ENCODE measurements at regions of chr6 and their contacts with region 1.

Region 1: GRCh38 chr6:37741757-37742400 is 44.2 kb upstream of the MDGA1 start:
- DNase-seq: no peak
- ATAC-seq: no peak; the same call in 1 of the 2 replicates
- H3K4me3 ChIP-seq: no peak overlapping the region
- H3K27ac ChIP-seq: no peak overlapping the region
- H3K4me1 ChIP-seq: no peaks in the 10 kb centered on the region
- H3K27me3 ChIP-seq: peaks cover 20% of the 10 kb centered on the region
- CTCF ChIP-seq: peak; percentile 49

Region 2: DNA sequence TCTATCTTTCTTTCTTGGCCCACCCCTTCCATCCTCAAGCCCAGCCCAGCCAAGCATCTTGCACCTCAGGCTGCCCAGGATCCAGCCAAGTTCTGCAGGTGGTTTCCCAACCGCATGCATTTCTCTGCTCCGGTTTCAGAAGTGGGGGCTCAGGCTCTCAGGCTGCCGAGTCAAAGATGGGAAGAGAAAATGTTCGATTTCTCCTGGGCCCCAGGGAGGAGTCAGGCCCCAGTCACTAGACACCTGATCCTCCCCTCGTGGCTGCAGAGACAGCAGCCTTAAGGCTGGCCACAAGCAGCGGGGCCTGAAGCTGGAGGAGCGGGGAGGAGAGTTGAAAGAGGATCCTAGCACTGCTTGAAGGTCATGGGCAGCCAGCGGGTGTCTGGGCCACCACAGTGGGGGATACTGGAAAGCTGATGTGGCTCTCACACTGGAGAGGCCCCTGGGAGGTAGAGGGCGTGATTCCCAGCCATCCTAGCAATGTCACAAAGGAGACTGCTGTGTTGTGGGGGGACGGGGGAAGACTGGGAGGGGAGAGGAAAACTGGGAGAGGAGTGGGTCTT is 35.5 kb after region 1 on chr6:
- CTCF ChIA-PET with region 1: no interaction called
- POLR2A ChIA-PET with region 1: no interaction called
- intact Hi-C with region 1: no loop called
- DNase-seq: no peak
- ATAC-seq: no peak
- H3K4me3 ChIP-seq: no peak overlapping the region
- H3K27ac ChIP-seq: no peak overlapping the region
- H3K4me1 ChIP-seq: no peaks in the 10 kb centered on the region
- H3K27me3 ChIP-seq: no peaks in the 10 kb centered on the region
- CTCF ChIP-seq: no peak

Region 3: GRCh38 chr6:37791156-37791919 is 49.5 kb after region 1 on chr6:
- CTCF ChIA-PET with region 1: interaction called, 24 read pairs
- POLR2A ChIA-PET with region 1: no interaction called
- intact Hi-C with region 1: no loop called
- DNase-seq: peak; percentile 98
- ATAC-seq: peak; percentile 97
- H3K4me3 ChIP-seq: no peak overlapping the region
- H3K27ac ChIP-seq: no peak overlapping the region
- H3K4me1 ChIP-seq: peaks cover 23% of the 10 kb centered on the region
- H3K27me3 ChIP-seq: no peaks in the 10 kb centered on the region
- CTCF ChIP-seq: peak; percentile 94

Region 4: DNA sequence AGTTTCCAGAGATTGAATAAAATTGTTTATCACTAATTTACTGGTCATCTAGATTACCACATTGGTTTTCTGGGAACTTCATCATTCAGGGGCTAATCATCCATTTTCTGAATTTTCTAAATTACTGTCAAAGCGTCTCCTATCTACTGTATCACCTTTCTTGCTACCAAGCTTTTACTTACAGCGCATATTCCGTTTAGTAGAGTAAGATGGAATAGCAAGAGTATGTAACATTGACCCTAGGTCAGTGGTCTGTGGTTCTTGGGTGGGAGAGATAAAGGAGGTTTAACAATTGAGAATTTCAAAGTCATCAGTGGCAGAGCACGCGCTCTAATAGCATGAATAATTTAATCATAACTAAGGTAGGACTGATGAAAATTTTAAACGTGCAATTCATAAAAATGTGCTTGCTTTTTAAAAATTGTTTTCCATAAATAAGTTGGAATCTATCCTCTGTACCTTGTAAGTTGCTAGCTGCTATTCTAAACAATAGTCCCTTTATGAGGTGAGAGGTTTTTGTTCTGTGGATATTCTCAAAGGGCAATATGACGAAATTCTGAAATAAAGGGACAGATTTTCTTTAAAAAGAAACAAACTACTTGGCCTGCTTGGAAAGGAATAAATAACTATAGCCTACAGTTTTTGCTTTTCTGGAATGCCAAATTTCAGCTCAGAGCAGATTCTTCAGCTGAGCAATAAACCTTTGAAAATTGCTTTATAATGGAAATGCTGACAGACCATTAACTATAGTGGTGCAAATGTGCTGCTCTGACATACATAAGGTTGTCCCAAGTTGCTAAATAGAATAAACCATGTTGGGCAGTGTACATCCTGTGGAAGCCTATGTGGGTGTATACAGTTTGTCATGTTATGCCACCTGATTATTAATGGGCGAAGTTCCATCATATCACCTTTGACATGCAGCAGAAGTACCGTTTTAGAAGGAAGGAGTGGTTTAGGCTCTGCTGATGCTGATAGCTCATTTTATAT is 161.8 kb after region 1 on chr6:
- CTCF ChIA-PET with region 1: no interaction called
- POLR2A ChIA-PET with region 1: no interaction called
- intact Hi-C with region 1: no loop called
- DNase-seq: no peak
- ATAC-seq: no peak
- H3K4me3 ChIP-seq: no peak overlapping the region
- H3K27ac ChIP-seq: no peak overlapping the region
- H3K4me1 ChIP-seq: no peaks in the 10 kb centered on the region
- H3K27me3 ChIP-seq: no peaks in the 10 kb centered on the region
- CTCF ChIP-seq: no peak

Region 5: GRCh38 chr6:38164671-38165108 is 422.8 kb after region 1 on chr6:
- CTCF ChIA-PET with region 1: interaction called, 14 read pairs
- POLR2A ChIA-PET with region 1: no interaction called
- intact Hi-C with region 1: no loop called
- DNase-seq: no peak
- ATAC-seq: no peak
- H3K4me3 ChIP-seq: no peak overlapping the region
- H3K27ac ChIP-seq: no peak overlapping the region
- H3K4me1 ChIP-seq: no peaks in the 10 kb centered on the region
- H3K27me3 ChIP-seq: no peaks in the 10 kb centered on the region
- CTCF ChIP-seq: no peak